ENCODE measurements at regions of chr19 and their contacts with region 1.

Region 1: DNA sequence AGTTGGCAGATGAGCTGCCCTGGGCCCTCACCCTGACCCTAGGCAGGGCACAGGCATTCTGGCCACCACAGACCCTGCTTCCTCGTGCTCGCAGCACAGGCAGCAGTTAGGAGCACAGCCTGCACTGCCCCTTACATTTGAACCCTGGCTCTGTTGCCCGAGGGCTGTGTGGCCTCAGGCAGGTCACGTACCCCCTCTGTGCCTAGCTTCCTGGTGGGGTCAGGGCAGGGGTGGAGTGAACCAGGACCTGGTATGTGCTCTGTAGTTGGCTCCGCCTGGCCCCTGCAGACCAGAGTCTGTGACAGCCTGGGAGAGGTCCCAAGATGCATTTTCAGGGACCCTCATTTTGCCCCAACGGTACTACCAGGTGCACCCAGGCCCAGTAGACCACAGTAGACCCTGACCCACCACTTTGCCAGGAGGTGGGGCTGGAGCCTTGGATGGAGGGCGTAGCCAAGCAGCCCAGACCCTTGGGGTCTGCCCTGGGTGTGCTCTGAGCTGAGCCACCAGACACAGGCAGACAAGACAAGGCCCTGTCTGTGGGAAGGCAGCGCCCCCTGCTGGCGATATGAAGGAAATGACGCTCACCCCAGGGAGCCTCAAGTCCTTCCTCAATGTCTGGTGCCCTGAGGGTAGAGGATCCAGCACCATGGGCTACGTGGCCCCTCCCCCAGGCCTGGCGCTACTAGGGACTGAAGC is 9.1 kb downstream of the LYL1 start:
- DNase-seq: peak; percentile 92
- CTCF ChIP-seq: peak; percentile 92

Region 2: GRCh38 chr19:13012690-13013608 is 80.6 kb before region 1 on chr19:
- CTCF ChIA-PET with region 1: interaction called, 15 read pairs
- POLR2A ChIA-PET with region 1: no interaction called
- DNase-seq: peak; percentile 62
- CTCF ChIP-seq: no peak

Region 3: DNA sequence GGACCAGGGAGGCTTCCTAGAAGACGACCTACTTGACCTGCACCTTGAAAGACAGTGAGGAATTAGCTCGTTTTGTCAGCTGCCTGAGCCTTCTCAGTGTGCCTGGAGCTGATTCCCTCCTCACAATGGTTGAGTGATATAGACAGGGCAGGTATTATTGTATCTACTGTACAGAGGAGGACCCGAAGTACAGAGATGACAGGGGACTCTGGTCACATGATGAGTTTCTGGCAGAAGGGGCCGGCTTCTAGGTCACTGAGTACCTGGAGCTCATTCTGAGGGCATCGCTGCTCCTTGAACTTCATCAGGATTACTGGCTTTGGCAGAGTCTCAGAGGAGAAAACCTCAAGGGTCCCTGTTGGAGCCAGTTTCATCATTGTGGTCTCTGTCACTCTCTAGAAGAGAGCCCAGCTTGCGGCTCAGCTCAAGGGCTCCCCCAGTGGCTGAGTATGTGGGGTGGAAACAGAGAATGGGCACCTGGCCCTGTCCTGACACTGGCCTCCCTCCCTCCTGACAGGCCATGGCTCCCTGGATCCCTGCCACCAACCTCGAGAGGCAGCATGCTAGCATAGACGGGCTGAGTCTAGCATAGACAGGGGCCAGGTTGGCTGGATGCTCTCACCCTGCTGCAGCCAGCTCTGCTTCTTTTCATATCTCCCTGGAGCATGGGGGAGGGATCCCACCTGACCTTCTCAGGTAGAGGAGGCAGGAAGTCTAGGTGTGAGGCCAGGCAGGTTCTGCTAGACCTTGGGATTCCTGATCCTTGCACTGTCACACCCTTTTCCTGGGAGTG is 59.5 kb before region 1 on chr19:
- CTCF ChIA-PET with region 1: interaction called, 17 read pairs
- POLR2A ChIA-PET with region 1: no interaction called
- DNase-seq: peak; percentile 79
- CTCF ChIP-seq: peak; percentile 69

Region 4: DNA sequence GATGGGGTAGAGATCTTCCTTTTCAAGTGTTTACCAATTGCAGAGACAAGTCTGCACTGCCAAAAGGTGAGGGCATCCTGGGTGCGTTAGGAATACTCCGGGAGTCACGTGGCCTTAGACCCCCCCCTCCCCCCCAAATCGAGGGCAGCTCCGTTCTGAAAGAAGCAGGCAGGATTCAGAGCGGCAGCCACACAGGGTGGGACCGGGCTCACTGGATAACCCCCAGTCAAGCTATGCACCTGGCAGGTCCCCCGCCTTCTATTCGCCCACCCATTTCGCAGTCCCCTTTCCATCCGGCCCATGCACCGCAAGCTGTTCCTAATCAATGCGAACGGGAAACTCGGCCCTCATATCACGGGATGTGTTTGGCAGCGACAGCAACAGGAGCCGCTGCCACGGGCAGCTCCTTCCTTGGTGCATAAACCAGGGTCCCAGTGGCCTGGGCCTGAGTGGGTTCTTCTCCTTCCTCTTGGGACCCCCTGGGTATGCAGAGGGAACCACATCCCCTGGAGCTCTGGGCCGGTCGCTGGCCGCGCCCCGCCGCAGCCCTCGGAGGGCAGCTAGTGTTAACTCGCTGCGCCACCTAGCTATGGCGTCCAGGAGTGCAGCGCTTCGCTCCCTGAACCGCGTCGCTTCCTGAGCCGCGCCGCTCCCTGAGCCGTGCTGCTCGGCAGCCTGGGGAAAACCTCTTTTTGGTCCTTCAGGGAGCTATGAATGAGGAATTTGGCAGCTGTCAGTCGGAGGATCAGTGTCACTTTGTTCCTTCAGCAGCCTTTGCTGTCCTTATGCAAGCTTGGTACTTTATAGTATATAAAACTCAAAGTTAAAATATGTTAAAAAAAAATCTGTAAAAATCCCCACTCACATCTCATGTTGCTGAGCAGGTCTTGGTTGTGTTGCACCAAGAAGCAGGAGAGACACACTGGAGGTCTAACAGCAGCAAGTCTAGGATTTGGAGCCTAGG is 32.3 kb before region 1 on chr19:
- CTCF ChIA-PET with region 1: interaction called, 69 read pairs
- POLR2A ChIA-PET with region 1: no interaction called
- DNase-seq: peak; percentile 91
- CTCF ChIP-seq: peak; percentile 96

Region 5: DNA sequence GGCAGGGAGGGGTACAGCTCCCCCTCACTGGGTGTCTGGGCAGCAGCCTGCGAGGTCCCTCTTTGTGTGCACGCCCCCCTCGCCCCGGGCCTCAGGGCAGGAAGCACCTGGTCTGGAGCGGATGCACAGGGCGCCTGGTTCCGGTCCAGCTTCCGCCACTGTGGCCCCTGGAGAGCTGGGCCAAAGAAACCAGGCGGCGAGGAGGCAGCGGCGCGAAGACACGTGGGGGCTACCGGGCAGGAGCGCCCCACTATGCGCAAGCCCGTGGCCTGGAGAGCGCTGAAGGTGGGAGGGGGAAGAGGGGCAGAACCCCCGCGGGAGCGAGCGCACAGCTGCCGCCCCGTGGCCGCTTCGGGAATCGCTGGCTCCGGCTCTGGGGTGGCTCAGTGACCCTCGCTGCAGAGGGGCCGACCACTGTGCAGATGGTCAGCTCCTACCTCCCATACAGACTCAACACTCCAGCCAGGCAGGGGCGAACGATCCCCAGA is 10.8 kb after region 1 on chr19:
- CTCF ChIA-PET with region 1: interaction called, 26 read pairs
- POLR2A ChIA-PET with region 1: no interaction called
- DNase-seq: peak; percentile 85
- CTCF ChIP-seq: peak; percentile 90

Measured in GM10248 (cell line).